Heart right ventricle (tissue), 16 donors: ENCODE measurements at regions of chr7 and their contacts with region 1.

Region 1: GRCh38 chr7:115827305-115828045 is 203.1 kb downstream of the TFEC start:
- DNase-seq: no peak
- ATAC-seq: no peak
- H3K4me3 ChIP-seq: no peak overlapping the region
- H3K27ac ChIP-seq: no peak overlapping the region
- H3K4me1 ChIP-seq: no peaks in the 10 kb centered on the region
- H3K27me3 ChIP-seq: no peaks in the 10 kb centered on the region
- CTCF ChIP-seq: no peak

Region 2: DNA sequence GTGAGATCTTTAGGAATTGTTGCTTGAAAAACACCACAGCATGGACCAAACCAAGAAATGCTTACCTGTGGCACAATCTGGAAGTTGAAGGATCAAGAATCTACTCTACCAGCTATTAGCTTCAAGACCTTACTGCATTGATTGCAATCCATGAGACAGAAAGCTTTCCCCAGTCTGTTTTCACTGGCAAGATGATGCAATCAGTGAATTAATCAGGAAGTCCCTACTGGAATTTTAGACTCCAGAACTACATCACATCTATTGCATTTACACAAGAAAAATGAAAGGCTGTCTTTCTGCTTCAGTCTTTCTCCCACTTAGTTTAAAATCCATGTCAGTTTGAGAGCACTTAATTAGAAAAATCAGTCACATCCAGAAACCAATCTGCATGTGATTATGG is 11.4 kb after region 1 on chr7:
- intact Hi-C with region 1: loop called in 1 of 10 experiments (anchors 2 kb)
- DNase-seq: no peak
- ATAC-seq: no peak
- H3K4me3 ChIP-seq: no peak overlapping the region
- H3K27ac ChIP-seq: no peak overlapping the region
- H3K4me1 ChIP-seq: no peaks in the 10 kb centered on the region
- H3K27me3 ChIP-seq: no peaks in the 10 kb centered on the region
- CTCF ChIP-seq: no peak